Tibial artery (tissue), 4 donors: ENCODE measurements at regions of chr20 and their contacts with region 1.

Region 1: GRCh38 chr20:13930281-13930680 is 60.1 kb downstream of the SEL1L2 start:
- DNase-seq: no peak
- H3K4me3 ChIP-seq: no peak overlapping the region
- H3K27ac ChIP-seq: peak overlapping the region; percentile 61 to 65
- H3K4me1 ChIP-seq: peaks cover 0 to 32% (median 7%) of the 10 kb centered on the region in 4 donors
- H3K27me3 ChIP-seq: no peaks in the 10 kb centered on the region
- CTCF ChIP-seq: no peak

Region 2: DNA sequence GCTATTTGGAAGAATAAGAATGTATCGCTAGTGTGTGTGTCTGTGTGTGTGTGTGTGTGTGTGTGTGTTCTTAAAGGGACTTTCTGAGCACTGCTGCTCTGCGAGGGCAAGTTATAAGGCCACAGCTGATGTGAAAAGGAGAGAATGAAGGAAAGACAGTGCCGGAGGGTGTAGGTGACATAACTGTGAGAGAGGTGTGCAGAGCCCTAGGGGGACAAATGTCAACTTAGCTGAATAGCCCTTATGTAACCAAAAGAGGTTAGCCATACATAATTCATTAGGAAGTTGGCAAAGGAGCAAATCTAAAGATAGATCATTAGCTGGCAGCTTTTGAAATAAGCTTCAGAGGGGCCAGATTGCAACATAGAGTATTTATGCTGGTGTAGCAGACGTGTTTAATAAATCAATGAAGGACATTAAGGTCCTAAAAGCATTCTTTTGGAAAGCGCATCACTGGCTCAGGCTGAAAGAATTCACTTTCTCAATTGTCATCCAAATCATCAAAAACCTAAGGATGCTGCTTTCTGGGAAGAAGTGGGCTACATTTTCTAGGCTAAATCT is 64.4 kb before region 1 on chr20:
- intact Hi-C with region 1: loop called (anchors 10 kb)
- DNase-seq: no peak
- H3K4me3 ChIP-seq: no peak overlapping the region
- H3K27ac ChIP-seq: peak overlapping the region; percentile 76 to 81
- H3K4me1 ChIP-seq: peaks cover 0 to 58% (median 43%) of the 10 kb centered on the region in 4 donors
- H3K27me3 ChIP-seq: no peaks in the 10 kb centered on the region
- CTCF ChIP-seq: no peak

Region 3: GRCh38 chr20:14219801-14220461 is 289.6 kb after region 1 on chr20:
- intact Hi-C with region 1: loop called (anchors 5 kb)
- DNase-seq: no peak
- H3K4me3 ChIP-seq: no peak overlapping the region
- H3K27ac ChIP-seq: no peak overlapping the region
- H3K4me1 ChIP-seq: no peaks in the 10 kb centered on the region
- H3K27me3 ChIP-seq: no peaks in the 10 kb centered on the region
- CTCF ChIP-seq: no peak